CD8-positive, alpha-beta T cell (primary cell): ENCODE measurements at regions of chr10 and their contacts with region 1.

Region 1: GRCh38 chr10:45408421-45409319 is 34.7 kb downstream of the ALOX5 start:
- DNase-seq: no peak
- ATAC-seq: no peak
- H3K4me3 ChIP-seq: no peak overlapping the region
- H3K4me3 Mint-ChIP-seq: no peak overlapping the region
- H3K27ac ChIP-seq: no peak overlapping the region
- H3K27ac Mint-ChIP-seq: no peak overlapping the region
- H3K4me1 ChIP-seq: no peaks in the 10 kb centered on the region
- H3K4me1 Mint-ChIP-seq: peaks cover 4% of the 10 kb centered on the region
- H3K27me3 ChIP-seq: no peaks in the 10 kb centered on the region
- H3K27me3 Mint-ChIP-seq: peaks cover 6% of the 10 kb centered on the region
- CTCF ChIP-seq: no peak

Region 2: DNA sequence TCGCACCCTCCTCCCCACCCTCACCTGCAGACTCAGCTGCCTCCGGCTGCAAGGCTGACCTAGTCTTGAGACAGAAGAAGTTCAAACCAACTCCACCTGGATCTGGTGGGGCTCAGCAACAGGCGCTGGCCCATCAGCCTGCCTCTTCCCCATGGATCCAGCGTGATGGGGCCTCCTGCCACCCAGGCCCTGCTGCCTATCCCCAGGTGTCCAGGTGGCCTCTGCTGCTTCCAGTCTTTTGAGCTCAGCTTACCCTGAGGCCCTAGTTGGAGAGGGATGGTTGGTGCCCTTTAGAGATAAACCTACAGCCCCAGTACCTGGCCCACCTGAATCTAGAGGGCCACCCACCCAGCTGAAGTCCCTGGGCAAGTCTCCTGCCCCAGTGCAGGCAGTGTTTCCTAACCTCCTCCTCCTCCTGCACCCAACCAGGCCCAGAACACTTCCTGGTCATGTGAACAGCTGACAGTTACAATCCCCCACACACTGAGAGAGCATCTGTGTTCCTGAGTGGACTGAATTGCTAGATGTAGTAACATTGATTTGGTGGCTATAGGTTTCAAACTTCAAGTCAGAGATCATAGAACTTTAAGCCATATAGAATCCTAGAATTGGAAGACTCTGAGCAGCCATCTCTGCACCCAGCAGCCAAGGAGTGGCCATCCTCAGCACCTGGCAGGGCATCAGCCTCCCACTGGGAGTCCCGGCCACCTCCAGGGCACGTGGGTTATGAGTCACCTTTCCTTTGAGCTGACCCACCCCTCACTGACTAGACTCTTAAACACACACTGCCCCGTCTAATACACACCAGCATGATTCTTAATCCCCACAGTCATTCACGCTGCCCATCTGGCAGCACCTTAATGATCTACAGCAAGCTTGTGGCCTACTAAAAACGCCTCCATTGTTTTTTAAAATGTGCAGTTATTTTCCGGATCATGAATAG is 17.2 kb after region 1 on chr10:
- CTCF ChIA-PET with region 1: no interaction called
- POLR2A ChIA-PET with region 1: no interaction called
- intact Hi-C with region 1: no loop called
- DNase-seq: no peak
- ATAC-seq: no peak
- H3K4me3 ChIP-seq: no peak overlapping the region
- H3K4me3 Mint-ChIP-seq: no peak overlapping the region
- H3K27ac ChIP-seq: no peak overlapping the region
- H3K27ac Mint-ChIP-seq: no peak overlapping the region
- H3K4me1 ChIP-seq: peaks cover 31% of the 10 kb centered on the region
- H3K4me1 Mint-ChIP-seq: peaks cover 39% of the 10 kb centered on the region
- H3K27me3 ChIP-seq: no peaks in the 10 kb centered on the region
- H3K27me3 Mint-ChIP-seq: no peaks in the 10 kb centered on the region
- CTCF ChIP-seq: no peak

Region 3: DNA sequence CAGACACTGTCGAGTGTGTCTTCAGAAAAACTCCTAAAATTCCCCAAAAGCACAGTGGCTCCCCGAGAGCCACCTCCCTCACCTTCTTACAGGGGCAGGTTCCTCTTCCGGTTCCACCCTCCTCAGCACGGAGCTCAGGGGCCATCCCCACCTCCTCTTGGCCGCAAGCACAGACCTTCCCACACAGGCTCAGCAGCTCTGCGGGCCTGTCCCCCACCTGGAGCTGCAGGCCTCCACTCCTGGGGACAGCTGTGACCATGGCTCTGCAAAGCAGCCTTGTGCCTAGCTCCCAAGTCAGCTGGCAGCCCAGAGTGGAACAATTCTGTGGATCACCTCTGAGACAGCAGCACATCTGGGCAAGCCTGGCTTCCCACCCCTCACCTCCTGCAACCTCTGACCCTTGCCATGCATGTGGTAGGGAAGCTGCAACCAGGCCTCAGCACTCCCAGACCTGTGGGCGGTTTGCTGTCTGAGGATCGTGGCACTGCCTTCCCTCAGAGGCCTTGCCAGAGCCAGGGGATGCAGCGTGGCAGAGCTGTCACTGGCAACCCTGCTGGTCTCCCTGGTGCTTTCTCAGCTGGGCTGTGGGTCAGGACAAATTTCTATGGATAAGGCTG is 45.1 kb after region 1 on chr10:
- CTCF ChIA-PET with region 1: no interaction called
- POLR2A ChIA-PET with region 1: no interaction called
- intact Hi-C with region 1: loop called in 1 of 2 experiments (anchors 5 kb)
- DNase-seq: no peak
- ATAC-seq: no peak
- H3K4me3 ChIP-seq: no peak overlapping the region
- H3K4me3 Mint-ChIP-seq: no peak overlapping the region
- H3K27ac ChIP-seq: no peak overlapping the region
- H3K27ac Mint-ChIP-seq: peak overlapping the region; percentile 18
- H3K4me1 ChIP-seq: no peaks in the 10 kb centered on the region
- H3K4me1 Mint-ChIP-seq: no peaks in the 10 kb centered on the region
- H3K27me3 ChIP-seq: no peaks in the 10 kb centered on the region
- H3K27me3 Mint-ChIP-seq: no peaks in the 10 kb centered on the region
- CTCF ChIP-seq: no peak